ENCODE measurements at regions of chr11 and their contacts with region 1.

Region 1: DNA sequence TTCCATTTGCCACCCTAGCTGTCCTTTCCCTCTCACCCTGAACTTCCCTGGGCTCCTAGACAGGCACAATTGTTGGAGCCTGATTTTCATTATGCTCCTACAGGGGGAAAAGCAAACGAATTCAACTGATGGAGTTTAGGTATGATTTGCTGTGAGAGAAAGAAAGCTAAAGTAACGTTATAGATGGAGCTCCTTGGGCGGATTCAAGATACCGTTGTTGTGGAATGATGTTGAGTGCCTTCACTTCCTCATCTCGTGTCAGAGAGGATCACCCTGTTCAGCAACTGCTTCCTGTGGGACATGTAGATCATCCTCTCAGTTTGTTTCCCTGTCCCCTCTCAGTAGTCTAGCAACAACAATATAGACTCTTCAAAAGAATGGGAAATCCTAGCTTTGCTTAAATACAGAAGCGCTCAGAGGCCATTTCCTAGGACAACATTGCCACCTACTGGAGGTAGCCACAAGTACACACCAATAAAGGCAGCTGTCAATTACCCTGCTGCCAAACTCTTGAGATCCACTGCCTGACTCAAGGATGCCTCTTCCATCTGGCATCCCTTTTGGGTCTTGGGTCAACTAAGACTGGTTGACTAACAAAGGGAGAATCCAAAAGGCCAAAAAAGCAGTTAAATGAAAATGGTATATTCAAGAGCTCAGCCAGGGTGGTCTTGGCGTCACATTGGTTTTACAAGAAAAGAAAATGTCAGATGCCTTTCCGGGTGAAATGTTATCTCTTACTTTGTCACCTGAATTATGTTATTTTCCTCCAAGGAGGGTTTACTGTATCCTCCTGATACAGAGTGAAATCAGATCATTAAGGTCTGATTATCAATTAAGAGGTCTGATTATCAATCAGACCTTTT is 13.5 kb upstream of the DTX4 start:
- DNase-seq: peak; percentile 66
- H3K4me3 ChIP-seq: peak overlapping the region in 1 of 2 experiments; percentile 32; a peak in 1 of 4 replicates
- H3K27ac ChIP-seq: no peak overlapping the region
- H3K4me1 ChIP-seq: no peaks in the 10 kb centered on the region
- H3K27me3 ChIP-seq: peaks cover 10% of the 10 kb centered on the region; the same call in 1 of the 2 replicates
- CTCF ChIP-seq: peak; percentile 88
- EP300 ChIP-seq: no peak
- RAD21 ChIP-seq: peak; percentile 88

Region 2: DNA sequence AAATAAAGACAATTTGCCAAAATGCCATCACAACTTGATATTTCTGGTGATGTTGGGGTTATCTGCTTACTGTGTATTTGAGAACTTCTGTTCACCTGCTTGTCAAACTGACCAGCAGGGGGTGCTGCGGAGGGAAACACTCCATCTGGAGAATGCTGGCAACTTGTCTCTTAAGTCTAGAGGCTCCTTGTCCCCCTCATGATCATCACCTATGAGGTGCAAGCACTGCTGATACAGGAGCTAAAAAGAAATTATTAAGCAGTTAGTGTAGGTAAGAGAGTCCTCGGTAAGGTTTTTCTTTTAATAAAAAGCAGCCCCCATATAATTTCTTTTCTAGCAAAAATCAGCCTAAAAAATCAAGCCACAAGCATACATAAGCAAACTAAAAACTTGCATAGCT is 105.0 kb before region 1 on chr11:
- CTCF ChIA-PET with region 1: interaction called, 35 read pairs
- POLR2A ChIA-PET with region 1: no interaction called
- DNase-seq: peak; percentile 21
- H3K4me3 ChIP-seq: no peak overlapping the region; a peak in 1 of 4 replicates
- H3K27ac ChIP-seq: no peak overlapping the region
- H3K4me1 ChIP-seq: no peaks in the 10 kb centered on the region; a peak in 1 of 4 replicates
- H3K27me3 ChIP-seq: no peaks in the 10 kb centered on the region; the same call in 1 of the 2 replicates
- CTCF ChIP-seq: peak; percentile 74
- EP300 ChIP-seq: no peak
- RAD21 ChIP-seq: peak; percentile 37; the same call in 1 of the 2 replicates

Region 3: DNA sequence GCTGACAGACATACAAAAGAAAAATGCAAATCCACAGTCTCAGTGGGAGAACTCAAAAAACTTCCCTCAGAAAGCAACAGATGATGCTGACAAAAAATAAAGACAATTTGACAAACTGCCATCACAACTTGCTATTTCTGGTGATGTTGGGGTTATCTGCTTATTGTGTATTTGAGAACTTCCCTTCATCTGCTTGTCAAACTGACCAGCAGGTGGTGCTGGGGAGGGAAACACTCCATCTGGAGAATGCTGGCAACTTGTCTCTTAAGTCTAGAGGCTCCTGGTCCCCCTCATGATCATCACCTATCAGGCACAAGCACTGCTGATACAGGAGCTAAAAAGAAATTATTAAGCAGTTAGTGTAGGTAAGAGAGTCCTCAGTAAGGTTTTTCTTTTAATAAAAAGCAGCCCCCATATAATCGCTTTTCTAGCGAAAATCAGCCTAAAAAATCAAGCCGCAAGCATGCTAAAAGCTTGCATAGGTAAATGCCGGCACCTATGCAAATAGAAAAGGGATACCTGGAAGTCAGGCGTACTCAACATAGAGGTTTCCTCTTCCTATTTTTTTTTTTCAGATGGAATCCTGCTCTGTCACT is 61.2 kb before region 1 on chr11:
- CTCF ChIA-PET with region 1: interaction called, 29 read pairs
- POLR2A ChIA-PET with region 1: no interaction called
- DNase-seq: peak; percentile 34
- H3K4me3 ChIP-seq: no peak overlapping the region
- H3K27ac ChIP-seq: no peak overlapping the region
- H3K4me1 ChIP-seq: no peaks in the 10 kb centered on the region
- H3K27me3 ChIP-seq: peaks cover 3% of the 10 kb centered on the region; the same call in 1 of the 2 replicates
- CTCF ChIP-seq: peak; percentile 70
- EP300 ChIP-seq: no peak
- RAD21 ChIP-seq: peak; percentile 55

Region 4: GRCh38 chr11:59106363-59107336 is 51.8 kb before region 1 on chr11 and contains the start of gene FAM111B:
- CTCF ChIA-PET with region 1: interaction called, 12 read pairs
- POLR2A ChIA-PET with region 1: no interaction called
- DNase-seq: peak; percentile 86
- H3K4me3 ChIP-seq: peak within 1 kb of the TSS; percentile 58 to 66
- H3K27ac ChIP-seq: peak within 1 kb of the TSS in 1 of 2 experiments; percentile 50; a peak in 1 of 4 replicates
- H3K4me1 ChIP-seq: peaks cover 0 to 10% of the 10 kb centered on the region in 2 experiments; a peak in 2 of 4 replicates
- H3K27me3 ChIP-seq: no peaks in the 10 kb centered on the region
- CTCF ChIP-seq: no peak
- EP300 ChIP-seq: no peak
- RAD21 ChIP-seq: no peak
- polyA plus RNA-seq, gene FAM111B: 0.94 and 1.0 TPM in 2 replicates

Region 5: GRCh38 chr11:59142530-59143507 is 15.6 kb before region 1 on chr11 and contains the start of gene FAM111A:
- CTCF ChIA-PET with region 1: interaction called, 62 read pairs
- POLR2A ChIA-PET with region 1: interaction called, 7 read pairs
- DNase-seq: peak; percentile 84
- H3K4me3 ChIP-seq: peak within 1 kb of the TSS; percentile 82 to 95
- H3K27ac ChIP-seq: peak within 1 kb of the TSS; percentile 71 to 79
- H3K4me1 ChIP-seq: peaks cover 2 to 4% of the 10 kb centered on the region in 2 experiments; a peak in 2 of 4 replicates
- H3K27me3 ChIP-seq: no peaks in the 10 kb centered on the region
- CTCF ChIP-seq: peak; percentile 47
- EP300 ChIP-seq: no peak
- RAD21 ChIP-seq: no peak
- polyA plus RNA-seq, gene FAM111A: 5.9 and 8.7 TPM in 2 replicates

Region 6: DNA sequence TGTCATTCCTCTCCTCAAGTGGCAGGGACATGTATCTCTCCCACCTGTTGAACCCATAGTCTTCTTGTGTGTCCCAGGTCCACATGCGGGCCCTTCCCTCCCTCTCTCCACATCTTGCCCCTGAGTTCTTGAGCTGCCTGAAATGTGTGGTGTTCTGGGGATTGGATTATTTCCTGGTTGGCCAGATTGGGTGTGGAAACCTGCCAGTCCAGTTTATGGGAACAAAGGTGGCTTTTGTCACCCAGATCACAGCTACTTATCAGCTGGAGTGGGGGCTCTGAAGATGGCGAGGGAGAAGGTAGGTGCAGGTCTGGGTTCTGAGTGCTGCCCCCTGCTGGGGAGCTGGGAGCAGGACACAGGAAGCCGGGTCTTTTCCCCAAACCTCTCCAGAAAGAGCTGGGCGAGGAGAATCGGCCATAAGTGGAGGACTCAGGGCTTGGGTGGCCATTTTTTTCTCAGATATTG is 27.7 kb after region 1 on chr11:
- CTCF ChIA-PET with region 1: interaction called, 13 read pairs
- POLR2A ChIA-PET with region 1: no interaction called
- DNase-seq: peak; percentile 68
- H3K4me3 ChIP-seq: no peak overlapping the region; a peak in 1 of 4 replicates
- H3K27ac ChIP-seq: no peak overlapping the region
- H3K4me1 ChIP-seq: no peaks in the 10 kb centered on the region
- H3K27me3 ChIP-seq: peaks cover 5% of the 10 kb centered on the region; the same call in 1 of the 2 replicates
- CTCF ChIP-seq: peak; percentile 59
- EP300 ChIP-seq: no peak
- RAD21 ChIP-seq: no peak

Region 7: DNA sequence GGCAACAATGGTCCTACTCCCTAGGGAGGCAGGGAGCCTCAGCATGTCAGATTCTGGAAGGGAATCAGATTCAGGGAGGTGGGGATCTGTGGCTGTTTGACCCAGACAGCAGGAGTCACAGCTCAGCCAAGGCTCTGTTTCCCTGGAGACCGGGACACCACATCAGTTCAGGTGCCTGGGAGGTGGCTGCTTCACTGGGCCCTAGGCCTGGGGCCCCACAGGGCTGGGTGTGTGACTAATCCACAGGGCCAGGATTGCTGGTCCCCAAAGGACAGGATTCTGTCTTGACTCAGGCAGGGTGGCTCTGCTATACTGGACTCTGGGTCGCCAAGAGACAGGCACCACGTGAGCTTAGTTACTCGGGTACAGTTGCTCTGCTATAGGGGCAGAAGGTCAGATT is 196.8 kb after region 1 on chr11:
- CTCF ChIA-PET with region 1: no interaction called
- POLR2A ChIA-PET with region 1: no interaction called
- DNase-seq: no peak
- H3K4me3 ChIP-seq: no peak overlapping the region
- H3K27ac ChIP-seq: no peak overlapping the region
- H3K4me1 ChIP-seq: no peaks in the 10 kb centered on the region
- H3K27me3 ChIP-seq: no peaks in the 10 kb centered on the region
- CTCF ChIP-seq: no peak
- EP300 ChIP-seq: no peak
- RAD21 ChIP-seq: no peak